CD8-positive, alpha-beta memory T cell (primary cell): ENCODE measurements at regions of chr11 and their contacts with region 1.

Region 1: GRCh38 chr11:10735481-10736475 is 15.3 kb upstream of the CTR9 start:
- DNase-seq: peak; percentile 77 to 89 (median 84)
- H3K4me3 ChIP-seq: no peak overlapping the region
- H3K4me3 Mint-ChIP-seq: peak overlapping the region in 5 of 7 donors; percentile 49 to 84 (median 69)
- H3K27ac ChIP-seq: peak overlapping the region; percentile 54
- H3K27ac Mint-ChIP-seq: peak overlapping the region; percentile 2 to 61 (median 33)
- H3K4me1 ChIP-seq: peaks cover 9% of the 10 kb centered on the region
- H3K4me1 Mint-ChIP-seq: peaks cover 8 to 15% (median 15%) of the 10 kb centered on the region in 3 donors
- H3K27me3 ChIP-seq: no peaks in the 10 kb centered on the region
- H3K27me3 Mint-ChIP-seq: peaks cover 7 to 12% of the 10 kb centered on the region in 2 donors

Region 2: DNA sequence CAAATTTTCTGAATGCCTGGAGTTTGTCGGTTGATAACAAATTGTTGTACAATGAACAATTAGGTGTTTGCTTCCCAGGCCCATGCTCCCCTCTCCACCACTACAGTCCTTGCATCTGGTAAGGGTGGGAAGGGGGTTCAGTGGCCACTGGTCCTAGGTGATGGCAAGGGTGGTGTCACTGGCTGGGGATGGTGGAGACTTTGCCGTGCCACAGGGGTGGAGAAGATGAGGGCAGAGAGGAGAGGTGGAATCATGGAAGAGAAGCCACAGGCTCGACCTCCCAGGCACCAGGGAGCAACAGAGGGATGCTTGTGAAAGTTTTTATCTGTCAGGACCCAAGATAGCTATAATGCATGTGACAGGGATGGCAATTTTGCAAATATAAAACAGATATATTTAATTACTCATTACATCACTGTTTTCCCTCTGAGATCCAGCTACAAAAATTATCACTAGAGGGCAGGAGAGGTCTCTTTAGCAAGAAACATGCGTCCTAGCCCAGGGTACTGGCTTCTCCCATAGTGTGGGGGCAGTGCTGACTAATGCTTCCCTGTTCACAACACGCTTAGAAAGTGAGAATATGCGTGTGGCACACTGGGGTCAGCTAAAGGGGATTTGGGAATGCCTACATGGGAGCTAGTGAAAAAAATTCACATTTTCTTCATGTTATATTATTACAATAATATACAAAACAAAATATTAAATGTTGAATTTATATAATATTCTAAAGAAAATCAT is 329.8 kb before region 1 on chr11:
- CTCF ChIA-PET with region 1: interaction called, 14 read pairs
- POLR2A ChIA-PET with region 1: no interaction called
- DNase-seq: peak in 4 of 5 donors; percentile 6 to 58 (median 42)
- H3K4me3 ChIP-seq: no peak overlapping the region
- H3K4me3 Mint-ChIP-seq: no peak overlapping the region
- H3K27ac ChIP-seq: no peak overlapping the region
- H3K27ac Mint-ChIP-seq: peak overlapping the region in 2 of 8 donors; percentile 70 to 84
- H3K4me1 ChIP-seq: peaks cover 10% of the 10 kb centered on the region
- H3K4me1 Mint-ChIP-seq: peaks cover 10 to 17% (median 14%) of the 10 kb centered on the region in 3 donors
- H3K27me3 ChIP-seq: no peaks in the 10 kb centered on the region
- H3K27me3 Mint-ChIP-seq: no peaks in the 10 kb centered on the region

Region 3: DNA sequence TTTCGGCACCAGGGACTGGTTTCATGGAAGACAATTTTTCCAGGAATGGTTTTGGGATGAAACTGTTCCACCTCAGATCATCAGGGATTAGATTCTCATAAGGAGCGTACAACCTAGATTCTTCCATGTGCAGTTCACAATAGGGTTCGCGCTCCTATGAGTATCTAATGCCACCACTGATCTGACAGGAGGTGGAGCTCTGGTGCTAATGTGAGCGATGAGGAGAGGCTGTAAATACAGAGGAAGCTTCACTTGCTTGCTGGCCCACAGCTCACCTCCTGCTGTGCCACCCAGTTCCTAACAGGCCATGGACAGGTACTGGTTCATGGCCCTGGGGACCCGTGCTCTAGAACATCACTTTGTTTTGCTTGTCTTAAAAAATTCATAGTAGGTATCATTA is 322.5 kb before region 1 on chr11:
- CTCF ChIA-PET with region 1: interaction called, 13 read pairs
- POLR2A ChIA-PET with region 1: interaction called, 6 read pairs
- DNase-seq: peak in 4 of 5 donors; percentile 12 to 65 (median 44)
- H3K4me3 ChIP-seq: no peak overlapping the region
- H3K4me3 Mint-ChIP-seq: peak overlapping the region in 1 of 7 donors; percentile 49
- H3K27ac ChIP-seq: no peak overlapping the region
- H3K27ac Mint-ChIP-seq: peak overlapping the region in 1 of 8 donors; percentile 41
- H3K4me1 ChIP-seq: peaks cover 27% of the 10 kb centered on the region
- H3K4me1 Mint-ChIP-seq: peaks cover 31 to 35% (median 35%) of the 10 kb centered on the region in 3 donors
- H3K27me3 ChIP-seq: no peaks in the 10 kb centered on the region
- H3K27me3 Mint-ChIP-seq: peaks cover 0 to 1% of the 10 kb centered on the region in 2 donors

Region 4: GRCh38 chr11:10725114-10725906 is 10.5 kb before region 1 on chr11:
- CTCF ChIA-PET with region 1: interaction called, 10 read pairs
- POLR2A ChIA-PET with region 1: no interaction called
- DNase-seq: peak in 1 of 5 donors; percentile 16
- H3K4me3 ChIP-seq: no peak overlapping the region
- H3K4me3 Mint-ChIP-seq: no peak overlapping the region
- H3K27ac ChIP-seq: no peak overlapping the region
- H3K27ac Mint-ChIP-seq: peak overlapping the region in 2 of 8 donors; percentile 16 to 60
- H3K4me1 ChIP-seq: peaks cover 12% of the 10 kb centered on the region
- H3K4me1 Mint-ChIP-seq: peaks cover 7 to 18% (median 14%) of the 10 kb centered on the region in 3 donors
- H3K27me3 ChIP-seq: no peaks in the 10 kb centered on the region
- H3K27me3 Mint-ChIP-seq: peaks cover 0 to 6% of the 10 kb centered on the region in 2 donors

Region 5: DNA sequence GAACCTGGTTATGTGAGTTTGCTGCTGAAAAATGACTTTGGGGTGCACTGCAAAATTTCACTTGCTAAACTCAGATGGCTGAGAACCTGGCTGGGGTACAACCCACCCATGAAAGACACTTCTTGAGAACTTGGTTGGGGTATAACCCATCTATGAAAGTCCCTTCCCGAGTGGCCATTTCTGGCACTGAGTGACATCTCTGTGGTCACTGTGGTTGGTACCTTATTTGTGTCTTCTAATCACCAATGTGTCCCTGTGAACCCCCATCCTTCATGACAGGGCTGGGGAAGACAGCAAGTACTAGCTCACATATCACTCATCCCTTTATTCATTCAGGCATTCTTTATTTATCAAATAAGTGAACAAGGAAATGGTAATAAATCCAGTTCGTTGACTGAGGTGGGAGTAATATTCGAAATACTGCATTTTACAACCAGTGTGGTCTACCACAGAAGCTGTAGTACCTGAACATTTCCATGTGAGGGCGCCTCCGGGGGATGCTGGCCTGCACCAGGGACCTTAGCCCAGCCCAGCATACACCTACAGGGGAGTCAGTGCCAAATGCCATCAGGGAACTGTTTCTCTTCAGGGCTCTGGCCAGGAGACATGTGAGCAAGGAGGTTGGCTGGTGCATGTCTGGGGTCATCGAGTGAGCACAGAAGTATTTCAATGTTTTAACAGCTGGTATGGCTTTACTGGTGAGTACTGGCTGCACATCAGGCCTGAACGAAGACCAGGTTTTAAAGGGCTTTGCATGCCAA is 495.2 kb after region 1 on chr11:
- CTCF ChIA-PET with region 1: no interaction called
- POLR2A ChIA-PET with region 1: no interaction called
- DNase-seq: no peak
- H3K4me3 ChIP-seq: no peak overlapping the region
- H3K4me3 Mint-ChIP-seq: no peak overlapping the region
- H3K27ac ChIP-seq: no peak overlapping the region
- H3K27ac Mint-ChIP-seq: no peak overlapping the region
- H3K4me1 ChIP-seq: no peaks in the 10 kb centered on the region
- H3K4me1 Mint-ChIP-seq: no peaks in the 10 kb centered on the region
- H3K27me3 ChIP-seq: no peaks in the 10 kb centered on the region
- H3K27me3 Mint-ChIP-seq: peaks cover 16 to 43% of the 10 kb centered on the region in 2 donors